Activated naive CD8-positive, alpha-beta T cell treated with anti-CD3 and anti-CD28 coated beads, Interleukin-2, amount 10 ng/mL, durations not matched to agents 7 days and 5 days (primary cell): ENCODE measurements at regions of chr5 and their contacts with region 1.

Region 1: DNA sequence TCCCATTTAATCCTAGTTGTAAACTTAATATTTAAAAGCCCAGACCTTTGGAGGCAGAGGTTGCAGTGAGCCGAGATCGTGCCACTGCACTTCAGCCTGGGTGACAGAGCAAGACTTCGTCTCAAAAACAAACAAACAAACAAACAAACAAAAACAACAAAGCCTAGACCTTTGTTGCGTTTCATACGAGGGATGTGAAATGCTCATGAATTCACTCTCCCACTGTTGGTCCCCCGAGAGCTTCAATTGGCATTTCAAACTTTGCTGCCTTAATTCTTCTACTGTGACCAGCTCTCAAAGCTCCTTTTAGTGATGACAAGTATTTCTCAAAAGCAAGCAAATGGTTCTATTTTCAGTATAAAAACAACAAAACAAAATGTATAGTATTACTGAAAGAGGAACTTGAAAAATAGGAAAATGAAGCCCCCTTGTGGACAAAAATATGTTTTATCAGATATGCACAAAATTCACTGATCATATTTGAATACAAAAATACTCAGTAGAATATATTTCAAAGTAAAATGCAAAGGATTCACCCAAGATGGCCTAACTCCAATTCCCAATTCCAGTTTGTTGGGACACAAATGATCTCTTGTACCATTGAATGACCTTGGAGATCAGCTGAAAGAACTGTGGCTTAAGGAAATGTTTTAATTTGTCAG is 140.4 kb downstream of the ESM1 start:
- DNase-seq: no peak
- ATAC-seq: no peak
- H3K4me3 Mint-ChIP-seq: no peak overlapping the region
- H3K27ac Mint-ChIP-seq: no peak overlapping the region
- H3K4me1 Mint-ChIP-seq: peaks cover 13% of the 10 kb centered on the region
- H3K27me3 Mint-ChIP-seq: peaks cover 9% of the 10 kb centered on the region

Region 2: DNA sequence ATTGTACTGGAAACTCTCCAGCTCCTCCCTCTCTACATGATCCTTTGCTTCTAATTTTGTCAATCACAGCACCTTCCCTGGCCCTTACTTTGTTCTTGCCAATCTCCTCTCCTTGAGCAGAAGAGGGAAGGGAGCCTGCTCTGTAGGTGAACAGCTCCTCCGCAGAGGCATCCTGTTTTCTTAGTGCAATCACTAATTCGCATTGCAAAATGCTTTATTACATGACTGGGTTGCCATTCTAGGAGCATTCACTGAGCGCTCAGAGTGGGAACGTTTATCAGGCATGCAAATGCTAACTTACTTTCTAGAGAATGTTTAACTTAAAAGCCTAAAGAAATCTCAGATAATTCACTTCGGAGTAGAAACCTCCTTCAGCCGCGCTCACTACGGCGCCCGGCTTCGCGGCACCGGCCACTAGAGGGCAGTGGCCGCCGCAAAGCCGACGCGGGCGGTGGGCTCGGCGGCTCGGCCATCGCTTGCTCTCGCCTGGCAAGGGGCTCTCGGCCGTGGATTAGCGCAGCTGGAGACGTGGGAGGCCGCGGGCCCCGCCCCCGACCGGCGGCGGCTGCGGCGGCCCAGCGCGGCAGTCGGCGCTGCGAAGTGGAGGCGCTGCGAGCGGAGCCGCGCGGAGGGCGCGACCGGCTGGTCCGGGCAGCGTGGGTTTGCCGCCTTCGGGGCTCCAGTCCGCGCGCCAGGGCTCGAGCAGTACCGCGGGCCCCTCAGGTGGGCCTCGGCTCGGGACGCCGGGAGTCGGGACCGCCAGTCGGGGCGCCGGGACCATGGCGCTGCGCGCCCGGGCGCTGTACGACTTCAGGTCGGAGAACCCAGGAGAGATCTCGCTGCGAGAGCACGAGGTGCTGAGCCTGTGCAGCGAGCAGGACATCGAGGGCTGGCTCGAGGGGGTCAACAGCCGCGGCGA is 327.6 kb before region 1 on chr5 and contains the start of gene SNX18:
- POLR2A ChIA-PET with region 1: interaction called, 15 read pairs
- DNase-seq: peak; percentile 94
- ATAC-seq: peak; percentile 87
- H3K4me3 Mint-ChIP-seq: peak within 1 kb of the TSS; percentile 79
- H3K27ac Mint-ChIP-seq: peak within 1 kb of the TSS; percentile 68
- H3K4me1 Mint-ChIP-seq: peaks cover 36% of the 10 kb centered on the region
- H3K27me3 Mint-ChIP-seq: peaks cover 5% of the 10 kb centered on the region
- total RNA-seq, gene SNX18: 24.6 to 26.2 TPM

Region 3: GRCh38 chr5:54799645-54800044 is 45.4 kb before region 1 on chr5:
- POLR2A ChIA-PET with region 1: no interaction called
- DNase-seq: no peak
- ATAC-seq: no peak
- H3K4me3 Mint-ChIP-seq: no peak overlapping the region
- H3K27ac Mint-ChIP-seq: no peak overlapping the region
- H3K4me1 Mint-ChIP-seq: peaks cover 6% of the 10 kb centered on the region
- H3K27me3 Mint-ChIP-seq: peaks cover 4% of the 10 kb centered on the region

Region 4: GRCh38 chr5:54861212-54861894 is 16.3 kb after region 1 on chr5:
- POLR2A ChIA-PET with region 1: no interaction called
- DNase-seq: no peak
- ATAC-seq: no peak
- H3K4me3 Mint-ChIP-seq: no peak overlapping the region
- H3K27ac Mint-ChIP-seq: no peak overlapping the region
- H3K4me1 Mint-ChIP-seq: peaks cover 3% of the 10 kb centered on the region
- H3K27me3 Mint-ChIP-seq: peaks cover 23% of the 10 kb centered on the region

Region 5: GRCh38 chr5:54905943-54906537 is 61.0 kb after region 1 on chr5:
- POLR2A ChIA-PET with region 1: no interaction called
- DNase-seq: peak; percentile 71
- ATAC-seq: no peak
- H3K4me3 Mint-ChIP-seq: no peak overlapping the region
- H3K27ac Mint-ChIP-seq: no peak overlapping the region
- H3K4me1 Mint-ChIP-seq: peaks cover 58% of the 10 kb centered on the region
- H3K27me3 Mint-ChIP-seq: peaks cover 13% of the 10 kb centered on the region